A549 (cell line): ENCODE measurements at regions of chr15 and their contacts with region 1.

Region 1: DNA sequence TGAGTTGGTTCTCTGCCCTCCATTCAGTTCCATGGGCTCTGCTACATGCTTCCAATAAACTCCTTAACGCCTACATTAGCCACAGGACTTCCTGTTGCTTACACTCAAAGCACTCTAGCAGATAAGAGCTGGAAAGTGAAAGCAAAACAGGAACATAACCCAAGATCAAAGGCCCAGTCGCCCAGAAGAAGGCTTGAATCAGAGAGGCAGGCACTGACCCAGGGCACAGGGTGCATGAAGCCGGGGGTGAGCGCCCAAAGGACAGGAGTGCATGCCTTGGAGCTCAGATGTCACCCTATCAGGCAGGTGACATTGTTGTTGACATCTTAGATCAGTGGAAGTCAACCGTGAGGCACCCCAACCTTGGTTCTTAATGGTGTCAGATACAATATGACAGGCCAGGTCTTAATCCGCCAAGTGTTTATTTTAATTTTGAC is 235.1 kb downstream of the UACA start:
- DNase-seq: no peak
- ATAC-seq: no peak
- H3K4me3 ChIP-seq: no peak overlapping the region
- H3K27ac ChIP-seq: no peak overlapping the region; a peak in 1 of 6 replicates
- H3K4me1 ChIP-seq: peaks cover 18% of the 10 kb centered on the region
- CTCF ChIP-seq: no peak
- EP300 ChIP-seq: no peak
- POLR2A ChIP-seq: no peak
- RAD21 ChIP-seq: no peak

Region 2: DNA sequence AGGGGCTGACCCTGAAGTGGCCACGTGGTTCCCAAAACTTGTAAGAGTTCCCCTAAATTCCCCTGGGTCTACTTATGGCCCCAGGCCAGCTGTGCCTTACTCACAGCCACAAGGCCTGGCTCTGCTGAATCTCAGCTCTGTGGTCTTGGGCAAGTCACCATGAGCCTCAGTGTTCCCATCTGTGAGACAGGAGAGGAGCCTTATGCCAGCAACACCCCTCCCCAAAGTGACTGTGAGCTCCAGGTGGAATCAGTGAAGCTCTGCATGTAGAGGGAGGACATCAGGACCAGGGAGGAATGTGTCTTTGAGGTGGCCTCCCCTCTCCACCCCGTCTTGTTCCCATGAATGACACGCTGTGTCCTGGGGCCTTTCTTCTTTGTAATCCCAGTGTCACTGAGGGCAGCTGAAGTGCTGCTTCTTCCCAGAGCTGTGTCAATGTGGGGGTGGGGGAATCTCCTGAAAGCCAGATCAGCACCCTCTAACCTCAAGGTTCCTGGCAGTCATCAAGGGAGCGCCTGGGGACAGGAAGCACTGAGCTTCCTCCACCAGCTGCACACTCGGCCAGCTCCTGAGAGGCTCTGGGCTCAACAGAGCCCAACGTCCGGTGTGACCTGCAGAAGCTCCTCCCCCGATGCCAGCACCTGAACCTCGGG is 23.9 kb before region 1 on chr15:
- CTCF ChIA-PET with region 1: interaction called, 16 read pairs
- POLR2A ChIA-PET with region 1: interaction called, 18 read pairs
- DNase-seq: peak in 1 of 2 experiments; percentile 73
- ATAC-seq: no peak
- H3K4me3 ChIP-seq: no peak overlapping the region
- H3K27ac ChIP-seq: peak overlapping the region; percentile 93 to 96
- H3K4me1 ChIP-seq: peaks cover 62% of the 10 kb centered on the region
- CTCF ChIP-seq: no peak
- EP300 ChIP-seq: no peak
- POLR2A ChIP-seq: no peak
- RAD21 ChIP-seq: no peak

Region 3: GRCh38 chr15:70617076-70617910 is 89.0 kb after region 1 on chr15:
- CTCF ChIA-PET with region 1: no interaction called
- POLR2A ChIA-PET with region 1: no interaction called
- DNase-seq: peak in 1 of 2 experiments; percentile 29
- ATAC-seq: peak; percentile 62 to 72; a peak in 4 of 6 replicates
- H3K4me3 ChIP-seq: no peak overlapping the region
- H3K27ac ChIP-seq: peak overlapping the region in 1 of 2 experiments; percentile 16; a peak in 1 of 6 replicates
- H3K4me1 ChIP-seq: peaks cover 20% of the 10 kb centered on the region
- CTCF ChIP-seq: no peak
- EP300 ChIP-seq: no peak
- POLR2A ChIP-seq: no peak
- RAD21 ChIP-seq: no peak